ENCODE measurements at regions of chr2 and their contacts with region 1.

Region 1: DNA sequence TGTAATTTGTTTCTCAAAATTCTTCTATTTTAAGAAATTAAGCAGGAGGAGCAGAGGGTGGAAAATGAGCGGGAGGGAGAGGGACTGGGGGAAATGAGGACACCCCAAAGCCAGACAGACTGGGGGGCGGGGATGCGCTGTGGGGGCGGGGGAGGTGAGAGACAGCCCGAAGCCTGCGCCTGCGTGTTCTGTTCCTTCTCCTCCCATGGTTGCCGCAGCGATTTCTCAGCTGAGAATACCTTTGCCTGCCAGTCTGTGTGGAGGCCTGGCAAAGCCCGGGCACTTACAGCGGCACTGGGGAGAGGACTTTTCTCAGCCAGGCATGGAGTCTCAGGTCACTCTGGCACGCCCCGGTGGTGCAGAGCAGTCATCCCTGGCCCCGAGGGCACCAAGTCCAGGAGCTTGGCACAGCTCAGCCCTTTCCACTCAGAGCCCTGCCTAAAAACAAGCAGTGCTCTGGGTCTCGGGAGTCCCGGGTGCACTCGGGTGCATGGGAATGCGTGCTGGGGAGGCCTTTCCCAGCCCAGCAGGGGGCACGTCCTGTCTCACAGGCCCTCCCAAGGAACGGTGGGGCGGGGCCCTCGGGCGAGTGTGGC is 289.3 kb upstream of the HS6ST1 start:
- DNase-seq: peak in 2 of 3 donors; percentile 40 to 43
- ATAC-seq: peak in 1 of 4 donors; percentile 11
- H3K4me3 ChIP-seq: no peak overlapping the region
- H3K27ac ChIP-seq: no peak overlapping the region
- H3K4me1 ChIP-seq: no peaks in the 10 kb centered on the region
- H3K27me3 ChIP-seq: no peaks in the 10 kb centered on the region
- CTCF ChIP-seq: no peak
- POLR2A ChIP-seq: no peak

Region 2: DNA sequence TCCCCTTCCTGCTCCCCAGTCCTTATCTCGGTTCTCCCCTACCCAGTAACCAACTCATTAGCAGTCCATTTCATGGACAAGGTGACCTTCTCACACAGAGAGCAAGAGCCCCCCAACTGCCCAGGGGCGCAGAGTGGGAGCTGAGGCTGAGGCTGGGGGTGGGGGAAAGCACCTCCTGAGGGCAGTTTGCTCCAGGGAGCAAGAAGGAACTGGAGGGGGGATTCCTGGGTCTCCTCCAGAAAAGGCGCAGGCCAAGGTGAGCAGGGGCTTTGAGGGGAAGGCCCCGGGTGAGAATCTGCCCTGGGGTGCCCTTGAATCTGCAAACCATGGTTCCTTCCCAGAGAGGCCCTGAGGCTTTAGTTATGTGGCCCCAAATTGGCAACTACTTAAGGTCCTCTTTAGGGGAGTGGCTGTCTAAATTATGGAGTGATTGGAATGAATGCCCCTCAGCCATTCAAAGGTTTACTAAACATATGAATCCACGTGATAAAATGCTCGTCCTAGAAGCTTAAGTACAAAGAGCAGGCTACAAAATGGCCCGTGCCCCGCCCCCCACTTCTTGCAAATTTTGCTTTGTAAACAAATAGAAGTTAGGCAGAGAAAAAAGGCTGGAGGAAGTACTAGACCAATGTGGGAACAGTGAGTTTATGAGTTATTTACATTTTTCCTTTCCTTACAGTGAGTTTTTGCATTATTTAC is 165.8 kb before region 1 on chr2:
- intact Hi-C with region 1: loop called in 1 of 2 experiments (anchors 10 kb)
- DNase-seq: peak in 2 of 3 donors; percentile 57 to 70
- ATAC-seq: peak in 3 of 4 donors; percentile 29 to 57 (median 47)
- H3K4me3 ChIP-seq: peak overlapping the region in 2 of 3 donors; percentile 14 to 33
- H3K27ac ChIP-seq: peak overlapping the region in 2 of 3 donors; percentile 44 to 49
- H3K4me1 ChIP-seq: peaks cover 0 to 17% (median 8%) of the 10 kb centered on the region in 4 donors
- H3K27me3 ChIP-seq: no peaks in the 10 kb centered on the region
- CTCF ChIP-seq: no peak
- POLR2A ChIP-seq: no peak

Region 3: DNA sequence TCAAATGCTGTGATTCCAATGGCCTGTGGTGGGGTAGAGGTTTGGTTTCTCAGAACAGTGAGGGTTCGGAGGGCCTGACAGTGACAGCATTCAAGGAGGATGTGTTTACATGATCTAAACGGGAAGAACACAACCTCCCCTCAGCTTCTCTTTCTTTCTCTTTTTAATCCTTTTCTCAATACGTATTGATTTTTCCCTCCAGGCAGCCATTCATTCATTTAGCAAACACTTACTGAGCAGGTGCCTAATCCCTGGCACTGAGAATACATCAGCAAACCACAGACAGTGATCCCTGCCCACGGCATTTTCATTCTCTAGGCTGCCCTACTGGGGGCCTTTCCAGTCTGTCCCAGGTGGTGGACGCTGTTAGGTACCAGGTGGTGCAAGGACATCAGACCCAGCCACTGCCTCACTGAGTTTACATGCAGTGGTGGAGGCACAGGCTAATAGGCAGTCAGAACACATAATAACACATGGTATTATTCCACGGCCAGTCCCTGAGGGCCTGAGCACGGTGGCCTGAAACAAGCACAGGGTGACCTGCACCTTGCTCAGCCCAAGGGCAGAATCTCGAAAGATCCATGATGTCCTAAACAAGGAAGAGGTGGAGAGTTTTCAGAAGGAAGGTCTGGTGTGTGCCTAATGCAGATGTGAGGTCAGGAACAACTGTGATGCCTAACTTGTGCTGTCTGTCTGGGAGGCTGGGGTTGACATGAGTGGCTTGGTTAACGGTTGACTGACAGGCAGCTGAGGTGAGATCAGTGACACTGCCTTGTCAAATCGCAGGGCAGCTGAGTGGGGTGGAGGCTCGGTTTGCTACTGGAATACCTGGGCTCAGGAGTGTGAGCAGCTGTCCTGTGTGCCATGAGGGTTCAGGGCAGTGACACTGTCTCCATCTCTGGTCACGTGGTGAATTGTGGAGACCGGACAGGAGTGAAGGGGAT is 496.2 kb after region 1 on chr2:
- intact Hi-C with region 1: no loop called
- DNase-seq: no peak
- ATAC-seq: peak in 1 of 4 donors; percentile 26
- H3K4me3 ChIP-seq: no peak overlapping the region
- H3K27ac ChIP-seq: no peak overlapping the region
- H3K4me1 ChIP-seq: no peaks in the 10 kb centered on the region
- H3K27me3 ChIP-seq: no peaks in the 10 kb centered on the region
- CTCF ChIP-seq: no peak
- POLR2A ChIP-seq: no peak